Breast epithelium (tissue), 4 donors: ENCODE measurements at regions of chr4 and their contacts with region 1.

Region 1: DNA sequence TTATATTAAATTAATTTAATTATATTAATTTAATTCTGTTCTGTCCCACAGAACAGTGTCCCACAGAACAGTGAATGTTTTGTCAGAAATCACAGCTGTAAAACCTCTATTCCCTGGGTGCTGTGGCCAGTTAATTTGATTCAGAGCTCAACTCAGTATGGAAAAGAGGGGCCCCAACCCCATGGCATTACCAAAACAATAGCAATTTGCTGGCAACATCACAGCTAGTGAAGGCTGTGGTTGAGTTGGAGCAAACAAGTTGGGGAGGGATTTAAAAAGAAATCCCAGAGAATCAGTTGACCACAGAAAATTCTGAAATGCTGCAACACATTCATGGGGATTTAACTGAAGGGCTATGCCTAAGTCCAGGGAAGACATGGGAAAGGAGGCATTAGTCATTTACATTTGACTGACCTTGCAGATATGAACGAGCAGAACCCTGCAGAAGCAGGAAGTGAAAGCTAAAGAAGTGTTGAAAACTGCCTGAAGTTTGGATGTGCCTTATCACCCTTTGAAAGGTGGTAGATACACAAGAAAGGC is 30.1 kb downstream of the PDHA2 start:
- DNase-seq: no peak
- H3K4me3 ChIP-seq: no peak overlapping the region
- H3K27ac ChIP-seq: no peak overlapping the region
- H3K4me1 ChIP-seq: no peaks in the 10 kb centered on the region
- H3K27me3 ChIP-seq: no peaks in the 10 kb centered on the region
- CTCF ChIP-seq: no peak
- POLR2A ChIP-seq: no peak

Region 2: GRCh38 chr4:94965852-94966251 is 904.2 kb before region 1 on chr4:
- intact Hi-C with region 1: loop called (anchors 5 kb)
- DNase-seq: no peak
- H3K4me3 ChIP-seq: no peak overlapping the region
- H3K27ac ChIP-seq: no peak overlapping the region
- H3K4me1 ChIP-seq: no peaks in the 10 kb centered on the region
- H3K27me3 ChIP-seq: no peaks in the 10 kb centered on the region
- CTCF ChIP-seq: no peak
- POLR2A ChIP-seq: no peak

Region 3: GRCh38 chr4:95898226-95898625 is 28.2 kb after region 1 on chr4:
- intact Hi-C with region 1: no loop called
- DNase-seq: no peak
- H3K4me3 ChIP-seq: no peak overlapping the region
- H3K27ac ChIP-seq: no peak overlapping the region
- H3K4me1 ChIP-seq: no peaks in the 10 kb centered on the region
- H3K27me3 ChIP-seq: no peaks in the 10 kb centered on the region
- CTCF ChIP-seq: no peak
- POLR2A ChIP-seq: no peak

Region 4: GRCh38 chr4:96827086-96827485 is 957.1 kb after region 1 on chr4:
- intact Hi-C with region 1: no loop called
- DNase-seq: no peak
- H3K4me3 ChIP-seq: no peak overlapping the region
- H3K27ac ChIP-seq: no peak overlapping the region
- H3K4me1 ChIP-seq: no peaks in the 10 kb centered on the region
- H3K27me3 ChIP-seq: no peaks in the 10 kb centered on the region
- CTCF ChIP-seq: no peak
- POLR2A ChIP-seq: no peak